Gastrocnemius medialis (tissue), 4 donors: ENCODE measurements at regions of chr6 and their contacts with region 1.

Region 1: DNA sequence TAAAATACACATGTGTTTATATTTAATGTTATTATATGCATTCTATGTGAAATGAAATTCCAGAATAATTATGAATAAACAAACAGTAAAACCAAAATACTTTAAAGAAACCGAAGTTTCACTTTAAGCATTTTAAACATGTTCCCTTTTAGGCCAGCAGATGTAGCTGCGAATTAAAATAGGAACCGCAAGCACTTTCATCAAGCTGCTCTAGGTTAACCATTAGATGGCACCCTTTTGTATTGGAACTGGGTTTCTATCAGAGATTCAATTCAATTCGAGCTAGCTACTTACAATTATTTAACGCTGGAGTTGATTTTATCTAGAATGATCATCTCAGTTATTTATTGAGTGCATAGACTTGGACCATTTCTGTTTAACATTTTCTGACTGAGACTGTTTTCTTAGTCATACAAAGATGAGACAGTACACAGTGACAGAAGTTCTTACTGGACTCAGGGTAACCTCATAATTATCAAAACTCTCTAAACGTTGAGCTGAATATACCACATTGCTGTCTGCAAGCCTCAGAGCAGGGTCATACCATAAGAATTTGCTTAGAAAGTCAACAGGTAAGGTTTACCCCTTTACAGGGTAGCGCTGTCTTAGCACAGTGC is 8.5 kb downstream of the TMEM242 start:
- DNase-seq: no peak
- ATAC-seq: peak; percentile 50 to 62
- H3K4me3 ChIP-seq: no peak overlapping the region
- H3K27ac ChIP-seq: peak overlapping the region; percentile 7 to 90 (median 86)
- H3K4me1 ChIP-seq: peaks cover 6 to 30% of the 10 kb centered on the region in 2 donors
- H3K27me3 ChIP-seq: no peaks in the 10 kb centered on the region
- CTCF ChIP-seq: peak; percentile 57 to 82 (median 80)
- POLR2A ChIP-seq: no peak

Region 2: GRCh38 chr6:157434349-157435033 is 119.7 kb after region 1 on chr6:
- in situ Hi-C with region 1: no loop called
- intact Hi-C with region 1: loop called (anchors 5 kb)
- DNase-seq: peak; percentile 43 to 75
- ATAC-seq: peak; percentile 47 to 75
- H3K4me3 ChIP-seq: no peak overlapping the region
- H3K27ac ChIP-seq: peak overlapping the region; percentile 49 to 79 (median 70)
- H3K4me1 ChIP-seq: peaks cover 28 to 48% of the 10 kb centered on the region in 2 donors
- H3K27me3 ChIP-seq: no peaks in the 10 kb centered on the region
- CTCF ChIP-seq: no peak
- POLR2A ChIP-seq: no peak

Region 3: GRCh38 chr6:157571269-157571668 is 256.5 kb after region 1 on chr6:
- in situ Hi-C with region 1: loop called in 1 of 4 experiments (anchors 10 kb)
- intact Hi-C with region 1: loop called (anchors 2 kb)
- DNase-seq: no peak
- ATAC-seq: no peak
- H3K4me3 ChIP-seq: no peak overlapping the region
- H3K27ac ChIP-seq: no peak overlapping the region
- H3K4me1 ChIP-seq: peaks cover 4 to 21% of the 10 kb centered on the region in 2 donors
- H3K27me3 ChIP-seq: no peaks in the 10 kb centered on the region
- CTCF ChIP-seq: no peak
- POLR2A ChIP-seq: no peak

Region 4: DNA sequence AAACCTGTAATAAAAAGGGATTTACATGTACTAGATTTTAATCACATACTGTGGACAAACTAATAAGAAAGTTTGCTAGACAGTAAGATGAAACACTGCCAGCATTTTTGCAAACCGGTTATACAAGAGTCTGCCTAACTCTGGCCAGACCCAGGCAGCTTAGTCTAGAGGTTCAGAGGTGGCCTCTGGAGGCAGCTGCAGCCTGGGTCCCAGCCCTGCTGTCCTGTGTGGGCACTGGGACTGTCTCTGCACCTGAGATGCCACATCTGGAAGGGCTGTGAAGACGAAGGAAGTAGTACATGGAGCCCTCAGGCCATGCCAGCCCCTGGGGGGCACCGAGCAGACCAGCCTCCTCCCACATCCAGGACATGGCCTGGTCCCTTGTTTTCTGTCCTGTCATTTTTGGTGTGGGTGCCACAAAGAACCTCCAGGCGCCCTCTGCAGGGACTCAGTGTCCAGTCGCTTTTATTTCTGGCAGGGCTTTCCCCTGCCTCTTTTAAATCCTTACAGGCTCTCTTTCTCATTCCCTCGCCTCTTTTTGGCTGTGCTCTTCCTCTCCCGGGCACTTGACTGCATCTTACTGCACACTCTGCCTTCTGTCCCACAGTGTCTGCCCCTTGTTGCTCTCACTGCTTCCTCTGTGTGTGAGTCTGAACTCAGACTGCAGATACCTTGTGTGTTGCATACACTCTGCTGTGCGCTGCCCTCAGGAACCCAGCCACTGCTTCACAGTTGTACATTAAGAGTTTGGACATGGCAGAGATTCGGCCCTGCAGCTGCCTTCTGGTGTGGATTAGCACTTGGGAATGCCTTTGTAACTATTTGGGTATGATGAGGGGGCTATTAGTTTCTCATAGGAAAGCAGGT is 282.9 kb after region 1 on chr6:
- in situ Hi-C with region 1: loop called in 1 of 4 experiments (anchors 10 kb)
- intact Hi-C with region 1: loop called (anchors 2 kb)
- DNase-seq: peak in 1 of 2 donors; percentile 40
- ATAC-seq: peak; percentile 53 to 72
- H3K4me3 ChIP-seq: no peak overlapping the region
- H3K27ac ChIP-seq: no peak overlapping the region
- H3K4me1 ChIP-seq: no peaks in the 10 kb centered on the region
- H3K27me3 ChIP-seq: no peaks in the 10 kb centered on the region
- CTCF ChIP-seq: peak in 4 of 5 experiments; percentile 5 to 53 (median 33)
- POLR2A ChIP-seq: no peak

Region 5: DNA sequence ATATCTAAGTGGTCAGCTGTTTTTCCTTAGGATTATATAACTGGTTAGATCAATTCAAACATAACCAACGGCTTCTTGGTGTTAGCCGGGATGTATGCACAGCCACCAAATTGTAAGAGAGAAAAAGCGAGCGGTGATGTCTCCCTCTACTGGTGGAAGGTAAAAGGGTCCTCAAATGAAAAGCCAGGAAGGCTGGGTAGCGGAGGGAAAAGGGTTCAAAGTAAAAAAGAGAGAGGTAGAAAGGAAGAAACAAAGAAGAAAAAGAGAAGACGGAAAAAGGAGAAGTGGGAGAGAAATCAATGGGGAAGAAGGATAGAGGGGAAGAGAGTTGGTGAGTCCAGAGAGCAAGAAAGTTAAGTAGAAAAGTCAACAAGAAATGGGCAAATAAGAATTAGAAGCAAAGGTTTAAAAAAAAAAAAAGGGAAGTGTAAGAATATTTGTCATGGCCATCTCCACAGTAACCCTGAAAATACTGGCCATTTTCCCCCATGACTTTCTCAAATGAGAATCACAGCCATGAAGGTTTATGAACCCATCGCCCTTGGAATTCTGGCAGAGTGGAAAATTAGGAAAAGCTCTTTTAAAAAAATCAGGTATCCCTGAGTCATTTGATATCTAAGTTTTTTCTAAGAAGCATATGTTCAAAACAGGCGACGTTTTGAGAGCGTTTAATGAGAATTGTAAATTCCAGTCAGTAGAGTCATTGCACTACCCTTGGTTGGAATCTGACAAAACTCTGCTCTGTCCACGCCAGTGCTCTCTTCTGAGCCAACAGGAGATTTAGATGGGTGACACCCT is 352.6 kb after region 1 on chr6:
- in situ Hi-C with region 1: loop called in 2 of 4 experiments (anchors 10 kb)
- intact Hi-C with region 1: loop called (anchors 2 kb)
- DNase-seq: no peak
- ATAC-seq: peak; percentile 61 to 77
- H3K4me3 ChIP-seq: no peak overlapping the region
- H3K27ac ChIP-seq: no peak overlapping the region
- H3K4me1 ChIP-seq: peaks cover 28 to 31% of the 10 kb centered on the region in 2 donors
- H3K27me3 ChIP-seq: no peaks in the 10 kb centered on the region
- CTCF ChIP-seq: peak; percentile 64 to 89 (median 69)
- POLR2A ChIP-seq: no peak